ENCODE measurements at regions of chr2 and their contacts with region 1.

Region 1: DNA sequence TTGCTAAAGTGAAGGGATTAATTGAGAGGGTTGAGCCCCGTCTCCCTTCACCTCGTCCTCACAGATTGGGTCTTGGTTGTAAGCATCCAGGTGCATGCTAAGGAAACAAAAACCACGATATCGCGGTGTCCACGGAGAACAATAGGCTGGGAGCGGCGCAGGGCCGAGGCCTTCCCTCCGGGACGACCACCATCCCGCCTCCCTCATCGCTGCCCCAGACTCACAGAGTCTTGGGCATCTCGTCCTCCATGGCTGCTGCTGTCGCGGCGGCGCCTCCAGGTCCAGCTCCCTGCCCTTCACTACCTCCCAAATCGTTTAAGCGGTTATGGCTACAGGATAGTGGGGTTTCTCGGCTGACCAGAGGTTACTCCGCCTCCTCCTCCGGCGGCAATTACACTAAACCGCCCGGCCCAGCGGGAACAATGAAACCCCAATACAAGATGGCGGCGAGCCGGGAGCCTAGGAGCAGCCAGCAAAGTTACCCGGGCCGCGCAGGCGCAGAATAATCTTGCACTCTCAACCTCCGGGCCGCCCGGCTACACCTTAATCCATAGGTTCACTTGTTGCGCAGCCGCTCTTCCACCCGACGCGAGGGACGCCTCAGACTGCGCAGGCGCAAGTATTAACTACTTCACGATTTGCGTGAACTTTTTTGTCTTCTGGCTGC is at the start of gene TIA1:
- DNase-seq: peak; percentile 99
- H3K4me3 Mint-ChIP-seq: peak within 1 kb of the TSS; percentile 96
- H3K27ac Mint-ChIP-seq: peak within 1 kb of the TSS; percentile 99
- H3K4me1 Mint-ChIP-seq: peaks cover 26% of the 10 kb centered on the region
- H3K27me3 Mint-ChIP-seq: peaks cover 3% of the 10 kb centered on the region
- total RNA-seq, gene TIA1: 104 and 105 TPM in 2 replicates

Region 2: DNA sequence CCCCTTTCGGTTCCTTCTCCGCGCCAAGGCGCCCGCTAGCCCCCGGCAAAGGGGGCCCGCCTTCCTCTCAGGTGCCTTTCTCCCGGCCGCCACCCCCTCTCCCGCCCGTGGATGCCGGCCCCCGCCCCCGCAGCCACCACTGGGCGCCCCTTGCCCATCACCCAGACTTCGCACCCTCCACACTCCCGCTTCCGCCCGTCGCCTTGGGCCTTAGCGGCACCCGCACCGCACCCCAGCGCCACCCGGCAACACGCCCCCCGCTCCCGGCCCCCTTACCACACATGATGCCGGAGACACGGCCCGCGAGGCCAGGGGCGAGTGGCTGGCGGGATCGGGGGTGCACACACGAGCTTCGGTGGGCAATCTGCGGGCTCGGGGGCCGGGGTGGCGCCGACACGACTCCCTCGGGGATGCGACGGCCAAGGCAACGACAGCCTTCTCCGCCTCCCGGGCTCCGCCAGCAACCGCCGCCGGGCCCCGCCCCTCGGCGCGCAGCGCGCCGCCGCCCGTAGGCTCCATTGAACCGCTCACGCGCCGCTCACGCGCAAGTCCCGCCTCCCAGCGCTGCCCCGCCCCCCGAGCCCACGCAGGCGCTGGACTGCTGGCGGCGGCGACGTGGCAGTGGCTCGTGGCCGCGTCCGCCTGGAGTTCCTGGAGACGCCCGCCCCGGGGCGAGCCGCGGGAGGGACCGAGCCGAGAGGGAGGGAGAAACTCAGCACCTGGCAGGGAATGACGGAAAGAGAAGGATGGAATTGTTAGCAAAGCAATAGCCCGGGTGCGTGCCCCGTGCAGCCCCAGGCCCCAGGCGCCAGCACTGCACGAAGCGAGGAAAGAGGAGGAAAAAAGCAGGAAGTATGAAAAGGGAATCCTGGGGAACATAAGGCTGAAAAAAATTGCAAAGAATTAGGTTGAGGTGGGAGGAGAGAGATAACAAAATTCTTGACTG is 861.3 kb before region 1 on chr2 and contains the start of gene GFPT1:
- intact Hi-C with region 1: loop called (anchors 2 kb)
- DNase-seq: peak; percentile 99
- H3K4me3 Mint-ChIP-seq: peak within 1 kb of the TSS; percentile 98
- H3K27ac Mint-ChIP-seq: peak within 1 kb of the TSS; percentile 95
- H3K4me1 Mint-ChIP-seq: peaks cover 40% of the 10 kb centered on the region
- H3K27me3 Mint-ChIP-seq: no peaks in the 10 kb centered on the region
- total RNA-seq, gene GFPT1: 48.8 and 50.6 TPM in 2 replicates

Region 3: GRCh38 chr2:69829256-69830046 is 418.9 kb before region 1 on chr2 and contains the start of gene GMCL1:
- intact Hi-C with region 1: loop called (anchors 1 kb)
- DNase-seq: peak; percentile 100
- H3K4me3 Mint-ChIP-seq: peak within 1 kb of the TSS; percentile 95
- H3K27ac Mint-ChIP-seq: peak within 1 kb of the TSS; percentile 97
- H3K4me1 Mint-ChIP-seq: peaks cover 43% of the 10 kb centered on the region
- H3K27me3 Mint-ChIP-seq: no peaks in the 10 kb centered on the region
- total RNA-seq, gene GMCL1: 25.9 and 28.0 TPM in 2 replicates

Region 4: GRCh38 chr2:69907216-69907615 is 341.1 kb before region 1 on chr2:
- intact Hi-C with region 1: no loop called
- DNase-seq: peak; percentile 40
- H3K4me3 Mint-ChIP-seq: no peak overlapping the region
- H3K27ac Mint-ChIP-seq: no peak overlapping the region
- H3K4me1 Mint-ChIP-seq: peaks cover 19% of the 10 kb centered on the region
- H3K27me3 Mint-ChIP-seq: no peaks in the 10 kb centered on the region

Region 5: DNA sequence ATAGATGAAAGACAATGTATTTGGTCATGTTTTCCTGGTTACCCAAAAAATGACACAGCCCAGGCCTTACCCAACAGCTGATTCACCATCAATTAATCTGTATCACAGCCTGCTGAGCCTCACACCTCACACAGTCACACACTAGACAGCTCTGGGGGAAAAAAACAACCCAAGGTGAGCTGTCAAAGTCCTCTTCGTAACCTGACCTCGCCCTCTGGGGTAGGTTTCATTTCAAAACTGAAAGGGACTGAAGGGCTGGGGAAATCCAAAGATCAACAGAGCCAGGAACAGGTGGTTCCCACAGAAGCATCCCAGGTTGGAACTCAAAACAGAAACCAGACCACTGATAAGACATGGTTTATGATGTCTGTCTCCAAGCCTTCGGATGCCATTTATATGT is 179.3 kb before region 1 on chr2:
- intact Hi-C with region 1: loop called (anchors 1 kb)
- DNase-seq: peak; percentile 94
- H3K4me3 Mint-ChIP-seq: peak overlapping the region; percentile 47
- H3K27ac Mint-ChIP-seq: peak overlapping the region; percentile 91
- H3K4me1 Mint-ChIP-seq: peaks cover 43% of the 10 kb centered on the region
- H3K27me3 Mint-ChIP-seq: no peaks in the 10 kb centered on the region

Region 6: GRCh38 chr2:70258532-70258874 is 10.2 kb after region 1 on chr2:
- intact Hi-C with region 1: loop called (anchors 1 kb)
- DNase-seq: no peak
- H3K4me3 Mint-ChIP-seq: peak overlapping the region; percentile 91
- H3K27ac Mint-ChIP-seq: no peak overlapping the region
- H3K4me1 Mint-ChIP-seq: peaks cover 27% of the 10 kb centered on the region
- H3K27me3 Mint-ChIP-seq: no peaks in the 10 kb centered on the region

Measured in activated CD4-positive, alpha-beta T cell treated with anti-CD3 and anti-CD28 coated beads, Interleukin-2, amount 10 ng/mL, durations not matched to agents 24 days and 14 days (primary cell).